ENCODE measurements at regions of chr22 and their contacts with region 1.

Region 1: DNA sequence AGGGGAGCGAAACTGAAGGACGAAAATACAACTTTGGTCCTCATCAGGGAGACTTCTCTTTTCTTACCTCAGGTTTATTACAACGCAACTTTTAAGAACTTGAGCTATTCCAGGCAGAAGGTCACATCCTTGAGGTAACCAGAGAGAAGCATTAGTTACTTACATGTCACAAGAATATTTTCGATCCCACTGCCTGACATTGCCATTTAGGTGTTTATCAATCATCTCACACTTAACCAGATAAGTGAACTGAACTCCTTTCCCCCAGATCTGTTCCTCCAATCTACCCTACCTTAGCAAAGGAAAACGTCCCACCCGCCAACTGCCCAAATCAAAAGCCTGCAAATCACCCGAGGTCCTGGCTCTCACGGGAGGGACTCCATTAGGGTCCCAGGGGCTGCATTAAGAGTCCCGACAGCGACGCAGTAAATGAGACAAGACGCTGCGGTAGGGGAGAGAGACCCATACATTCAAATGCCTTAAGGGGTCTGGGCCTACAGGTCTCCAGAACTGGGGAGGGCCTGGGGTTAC is 734 bp downstream of the ZNF280B start:
- DNase-seq: no peak
- H3K4me3 ChIP-seq: peak overlapping the region; percentile 38 to 60 (median 43)
- H3K27ac ChIP-seq: no peak overlapping the region
- H3K4me1 ChIP-seq: no peaks in the 10 kb centered on the region
- H3K27me3 ChIP-seq: peaks cover 0 to 16% of the 10 kb centered on the region in 2 donors
- CTCF ChIP-seq: no peak
- POLR2A ChIP-seq: no peak

Region 2: GRCh38 chr22:22030493-22031182 is 477.2 kb before region 1 on chr22:
- intact Hi-C with region 1: no loop called
- DNase-seq: no peak
- H3K4me3 ChIP-seq: no peak overlapping the region
- H3K27ac ChIP-seq: peak overlapping the region in 1 of 2 donors; percentile 68
- H3K4me1 ChIP-seq: no peaks in the 10 kb centered on the region
- H3K27me3 ChIP-seq: no peaks in the 10 kb centered on the region
- CTCF ChIP-seq: no peak
- POLR2A ChIP-seq: no peak

Region 3: DNA sequence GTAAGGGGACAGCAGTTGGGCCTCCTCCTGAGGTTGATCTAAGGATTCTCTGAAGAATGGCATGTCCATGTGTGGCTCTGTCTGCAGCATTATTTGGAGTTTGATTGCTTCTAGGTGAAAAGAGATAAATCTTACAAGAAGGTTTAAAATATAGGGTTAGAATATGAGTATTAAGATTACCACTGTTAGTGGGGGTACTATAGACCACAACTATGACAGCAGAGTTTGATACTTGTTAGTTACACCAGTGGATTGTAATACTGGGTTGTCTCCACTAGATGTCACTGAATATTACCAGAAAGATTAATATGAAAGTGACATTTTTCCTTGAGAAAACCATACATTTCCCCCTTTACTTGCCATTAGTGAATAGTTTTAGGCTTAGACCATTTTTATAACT is 47.2 kb before region 1 on chr22:
- intact Hi-C with region 1: loop called (anchors 2 kb)
- DNase-seq: no peak
- H3K4me3 ChIP-seq: no peak overlapping the region
- H3K27ac ChIP-seq: no peak overlapping the region
- H3K4me1 ChIP-seq: no peaks in the 10 kb centered on the region
- H3K27me3 ChIP-seq: peaks cover 0 to 18% of the 10 kb centered on the region in 2 donors
- CTCF ChIP-seq: no peak
- POLR2A ChIP-seq: no peak

Region 4: GRCh38 chr22:22487869-22488597 is 19.8 kb before region 1 on chr22:
- intact Hi-C with region 1: loop called (anchors 1 kb)
- DNase-seq: no peak
- H3K4me3 ChIP-seq: no peak overlapping the region
- H3K27ac ChIP-seq: no peak overlapping the region
- H3K4me1 ChIP-seq: no peaks in the 10 kb centered on the region
- H3K27me3 ChIP-seq: no peaks in the 10 kb centered on the region
- CTCF ChIP-seq: no peak
- POLR2A ChIP-seq: no peak

Region 5: DNA sequence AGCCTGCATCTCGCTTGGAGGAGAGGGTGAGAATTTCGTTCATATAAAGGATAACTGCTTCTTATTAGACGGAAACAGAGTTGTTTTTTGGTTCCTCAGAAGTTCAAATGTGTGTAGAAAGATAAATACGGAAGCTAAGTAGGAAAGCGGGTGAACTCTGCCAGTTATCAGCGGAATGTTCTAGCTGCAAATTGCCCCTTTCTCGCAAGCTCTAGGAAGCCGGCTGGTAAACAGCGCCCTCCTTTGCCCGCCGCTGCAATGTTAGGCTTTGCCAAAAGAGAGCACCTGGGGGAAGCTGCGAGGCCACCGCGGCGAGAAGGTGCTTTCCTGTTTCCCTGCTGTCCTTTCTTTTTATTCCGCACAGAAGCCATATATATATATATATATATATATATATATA is 446.8 kb after region 1 on chr22:
- intact Hi-C with region 1: no loop called
- DNase-seq: no peak
- H3K4me3 ChIP-seq: no peak overlapping the region
- H3K27ac ChIP-seq: no peak overlapping the region
- H3K4me1 ChIP-seq: no peaks in the 10 kb centered on the region
- H3K27me3 ChIP-seq: peaks cover 0 to 16% of the 10 kb centered on the region in 2 donors
- CTCF ChIP-seq: no peak
- POLR2A ChIP-seq: no peak

Measured in breast epithelium (tissue), 4 donors.